ENCODE measurements at regions of chr4 and their contacts with region 1.

Region 1: DNA sequence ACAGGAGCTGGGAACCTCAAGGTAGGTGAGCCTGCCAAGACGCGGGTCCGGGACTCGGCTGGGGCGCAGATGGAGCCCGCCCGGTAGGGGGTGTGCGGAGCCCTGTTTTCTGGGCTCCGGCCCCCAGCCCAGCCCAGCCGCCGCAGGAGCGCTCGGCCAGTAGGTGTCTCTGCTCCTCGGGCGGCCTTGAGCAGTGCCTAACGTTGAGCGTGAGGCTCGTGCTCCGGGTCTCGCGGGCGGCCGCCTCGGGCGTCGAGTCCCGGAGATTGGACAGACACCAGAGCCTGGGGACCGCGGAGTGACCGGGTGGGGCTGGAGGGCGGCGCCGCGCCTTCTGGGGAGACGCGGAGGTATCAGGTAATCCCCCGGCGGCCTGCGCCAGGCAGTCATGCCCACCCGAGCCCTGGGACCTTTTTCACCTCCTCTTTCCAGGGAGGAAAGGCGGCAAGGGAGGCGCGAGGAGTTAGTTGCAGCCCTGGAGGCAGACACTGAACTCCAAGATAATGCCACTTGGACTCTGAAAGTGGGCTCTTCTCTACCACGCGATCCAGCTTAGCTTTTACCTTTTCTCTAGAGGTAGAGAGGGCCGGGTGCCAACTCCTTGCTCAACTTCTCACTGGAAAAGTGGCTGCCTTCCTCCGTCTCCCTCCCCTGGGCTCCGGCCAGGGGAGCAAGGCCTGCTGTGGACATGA is 14.5 kb upstream of the FGG start:
- DNase-seq: no peak

Region 2: DNA sequence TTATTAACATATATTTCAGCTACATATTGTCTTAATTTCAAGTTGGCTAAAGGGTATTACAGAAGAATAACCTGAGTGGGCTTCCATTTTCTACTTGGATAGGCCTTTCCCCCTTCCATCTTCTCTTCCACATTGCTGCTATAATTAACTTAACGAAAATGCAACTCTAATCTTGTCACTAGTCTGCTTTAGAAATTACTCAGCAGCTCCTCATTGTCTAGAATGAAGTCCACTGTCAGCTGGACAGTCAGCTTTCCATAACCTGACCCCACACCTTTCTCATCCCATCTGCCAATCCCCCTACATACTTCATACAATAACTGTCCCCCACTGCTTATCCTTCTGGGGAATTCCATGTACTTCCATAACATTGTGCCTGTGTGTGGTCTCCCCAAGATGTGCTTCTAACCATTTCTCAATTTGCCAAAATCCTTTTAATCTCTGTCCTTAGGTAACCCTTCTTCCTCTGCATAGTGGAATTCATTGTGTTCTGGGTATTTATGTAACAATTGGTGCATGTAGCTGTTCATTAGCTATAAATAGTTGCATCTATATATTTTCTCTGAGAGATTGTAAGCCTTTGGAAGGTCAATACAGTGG is 1277.6 kb before region 1 on chr4:
- intact Hi-C with region 1: no loop called
- DNase-seq: no peak

Region 3: GRCh38 chr4:154551872-154552686 is 74.9 kb before region 1 on chr4:
- intact Hi-C with region 1: loop called in 1 of 2 experiments (anchors 10 kb)
- DNase-seq: peak; percentile 86

Region 4: DNA sequence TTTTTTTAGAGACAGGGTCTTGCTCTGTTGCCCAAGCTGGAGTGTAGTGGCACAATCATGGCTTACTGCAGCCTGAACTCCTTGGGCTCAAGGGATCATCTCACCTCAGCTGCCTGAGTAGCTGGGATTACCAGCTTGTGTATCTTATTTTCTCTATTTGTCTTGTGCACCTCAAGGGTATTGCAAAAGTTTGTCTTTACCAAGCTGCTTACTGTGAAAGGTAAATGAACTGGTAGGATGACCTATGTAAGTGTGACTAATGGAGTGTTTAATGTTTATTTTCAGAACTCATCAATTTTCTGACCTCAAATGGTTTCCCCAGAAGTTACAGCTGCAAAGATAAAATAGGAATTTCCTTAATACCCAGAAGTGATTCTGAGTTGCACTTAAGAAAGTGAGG is 31.1 kb before region 1 on chr4:
- intact Hi-C with region 1: no loop called
- DNase-seq: no peak

Measured in posterior vena cava (tissue), 2 donors.